A673 (cell line): ENCODE measurements at regions of chr16 and their contacts with region 1.

Region 1: DNA sequence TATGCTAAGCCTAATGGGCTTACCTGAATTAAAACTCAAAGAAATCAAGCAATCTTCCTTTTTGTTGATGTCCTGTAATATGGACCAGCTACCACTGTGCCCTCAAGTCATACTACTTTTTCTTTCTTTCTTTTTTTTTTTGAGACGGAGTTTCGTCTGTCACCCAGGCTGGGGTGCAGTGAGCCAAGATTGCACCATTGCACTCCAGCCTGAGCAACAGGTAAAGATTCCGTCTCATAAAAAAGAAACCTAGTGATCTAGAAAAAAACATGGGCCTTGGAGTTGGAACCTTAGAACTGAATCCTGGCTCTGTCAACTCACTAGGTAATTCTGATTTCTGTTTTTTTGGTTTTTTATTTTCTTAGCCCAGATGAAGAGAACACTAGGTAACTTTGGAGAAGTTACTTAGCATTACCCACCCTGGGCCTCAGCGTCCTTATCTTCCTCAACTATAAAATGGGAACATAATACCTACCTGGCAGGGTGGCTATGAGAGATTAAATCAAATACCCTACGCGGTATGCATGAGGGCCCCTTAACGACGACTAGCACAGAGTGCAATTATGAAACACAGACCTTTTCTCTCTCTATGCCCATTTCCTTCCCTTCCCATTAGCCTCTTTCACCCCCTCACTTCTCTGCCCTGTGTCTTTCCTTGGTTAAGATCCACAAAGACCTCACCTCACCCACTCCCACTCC is 11.3 kb downstream of the XPO6 start:
- DNase-seq: no peak
- H3K4me3 ChIP-seq: no peak overlapping the region
- H3K27ac ChIP-seq: no peak overlapping the region
- H3K4me1 ChIP-seq: peaks cover 8% of the 10 kb centered on the region
- H3K27me3 ChIP-seq: no peaks in the 10 kb centered on the region
- CTCF ChIP-seq: no peak

Region 2: GRCh38 chr16:28839899-28840298 is 639.4 kb after region 1 on chr16:
- CTCF ChIA-PET with region 1: no interaction called
- POLR2A ChIA-PET with region 1: interaction called, 12 read pairs
- intact Hi-C with region 1: no loop called
- DNase-seq: no peak
- H3K4me3 ChIP-seq: no peak overlapping the region
- H3K27ac ChIP-seq: no peak overlapping the region
- H3K4me1 ChIP-seq: no peaks in the 10 kb centered on the region
- H3K27me3 ChIP-seq: no peaks in the 10 kb centered on the region
- CTCF ChIP-seq: no peak